ENCODE measurements at regions of chr4 and their contacts with region 1.

Region 1: GRCh38 chr4:100517864-100518341 is at the start of gene EMCN:
- DNase-seq: peak in 1 of 2 donors; percentile 56
- ATAC-seq: peak; percentile 75 to 93 (median 91)
- H3K4me3 ChIP-seq: peak within 1 kb of the TSS; percentile 6 to 64 (median 48)
- H3K27ac ChIP-seq: peak within 1 kb of the TSS; percentile 18 to 86 (median 76)
- H3K4me1 ChIP-seq: peaks cover 0 to 17% (median 0%) of the 10 kb centered on the region in 9 donors
- H3K27me3 ChIP-seq: no peaks in the 10 kb centered on the region
- CTCF ChIP-seq: no peak
- total RNA-seq, gene EMCN: 20.4 to 49.0 (median 35.6) TPM

Region 2: GRCh38 chr4:100421361-100421978 is 96.4 kb before region 1 on chr4:
- intact Hi-C with region 1: loop called in 1 of 10 experiments (anchors 10 kb)
- DNase-seq: no peak
- ATAC-seq: peak in 6 of 8 donors; percentile 43 to 81 (median 58)
- H3K4me3 ChIP-seq: peak overlapping the region in 3 of 10 donors; percentile 9 to 21 (median 10)
- H3K27ac ChIP-seq: peak overlapping the region in 5 of 10 donors; percentile 6 to 56 (median 37)
- H3K4me1 ChIP-seq: peaks cover 0 to 37% (median 8%) of the 10 kb centered on the region in 9 donors
- H3K27me3 ChIP-seq: no peaks in the 10 kb centered on the region
- CTCF ChIP-seq: peak; percentile 18 to 77 (median 57)

Region 3: DNA sequence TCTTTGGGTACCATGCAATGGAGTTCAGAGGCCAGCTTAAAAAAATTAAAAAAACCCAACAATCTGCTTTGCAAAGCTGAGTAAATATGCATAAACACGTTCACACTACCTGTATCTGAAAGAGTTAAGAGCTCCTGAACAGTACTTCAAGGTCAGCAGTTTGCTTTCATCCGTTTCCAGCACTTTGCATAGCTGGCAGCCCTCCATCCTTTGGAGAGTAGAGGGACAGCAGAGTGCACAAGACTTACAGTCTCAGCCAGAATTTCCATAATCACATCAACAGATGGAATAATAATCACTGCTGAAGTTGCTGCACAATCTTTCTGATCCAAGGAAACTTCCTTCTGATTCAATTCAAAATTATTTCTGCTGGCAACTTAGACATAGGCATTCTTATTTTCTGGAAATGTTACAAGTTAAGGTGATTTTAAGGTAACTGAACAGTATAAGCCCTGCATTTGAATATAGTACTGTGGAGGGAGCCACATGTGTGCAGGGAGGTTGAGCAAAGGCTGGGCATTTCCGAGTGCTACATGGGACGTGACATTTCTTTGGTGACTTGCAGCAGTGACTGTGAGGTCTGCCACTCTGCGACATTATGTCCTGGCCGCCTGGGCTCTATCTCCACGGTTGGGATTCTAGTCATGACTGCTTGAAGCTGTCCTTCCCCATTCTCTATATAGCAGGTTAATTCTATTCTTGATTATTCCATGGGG is 73.4 kb after region 1 on chr4:
- intact Hi-C with region 1: loop called in 1 of 10 experiments (anchors 5 kb)
- DNase-seq: peak; percentile 32 to 82
- ATAC-seq: peak; percentile 70 to 97 (median 93)
- H3K4me3 ChIP-seq: peak overlapping the region in 1 of 10 donors; percentile 5
- H3K27ac ChIP-seq: peak overlapping the region in 2 of 10 donors; percentile 41 to 50
- H3K4me1 ChIP-seq: peaks cover 0 to 29% (median 11%) of the 10 kb centered on the region in 9 donors
- H3K27me3 ChIP-seq: no peaks in the 10 kb centered on the region
- CTCF ChIP-seq: no peak

Region 4: DNA sequence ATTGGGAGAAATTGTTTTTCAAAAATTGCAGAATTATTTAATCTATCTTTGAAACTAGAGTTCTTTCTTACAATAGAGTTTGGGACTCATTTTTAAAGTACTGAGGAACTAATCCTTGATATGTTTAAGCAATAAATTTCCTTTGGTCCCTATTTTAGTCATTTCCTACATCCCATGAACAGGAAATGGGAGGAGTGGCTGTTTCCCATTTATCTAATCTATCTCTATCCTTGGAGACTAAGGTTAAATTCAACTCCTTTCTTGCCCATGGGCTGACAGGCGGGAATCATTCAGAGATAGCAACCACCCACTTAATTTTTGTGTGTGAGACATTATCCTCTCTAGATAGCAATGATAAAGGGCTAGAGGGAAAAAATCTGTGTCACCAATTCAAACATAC is 131.5 kb after region 1 on chr4:
- intact Hi-C with region 1: loop called in 4 of 10 experiments (anchors 2 to 10 kb)
- DNase-seq: no peak
- ATAC-seq: peak in 5 of 8 donors; percentile 44 to 83 (median 79)
- H3K4me3 ChIP-seq: no peak overlapping the region
- H3K27ac ChIP-seq: peak overlapping the region in 5 of 10 donors; percentile 5 to 51 (median 41)
- H3K4me1 ChIP-seq: peaks cover 0 to 26% (median 18%) of the 10 kb centered on the region in 9 donors
- H3K27me3 ChIP-seq: no peaks in the 10 kb centered on the region
- CTCF ChIP-seq: no peak

Region 5: GRCh38 chr4:100657187-100657586 is 139.3 kb after region 1 on chr4:
- intact Hi-C with region 1: loop called in 2 of 10 experiments (anchors 10 kb)
- DNase-seq: peak in 1 of 2 donors; percentile 3
- ATAC-seq: peak in 7 of 8 donors; percentile 29 to 83 (median 75)
- H3K4me3 ChIP-seq: no peak overlapping the region
- H3K27ac ChIP-seq: peak overlapping the region in 2 of 10 donors; percentile 10 to 16
- H3K4me1 ChIP-seq: peaks cover 0 to 27% (median 0%) of the 10 kb centered on the region in 9 donors
- H3K27me3 ChIP-seq: no peaks in the 10 kb centered on the region
- CTCF ChIP-seq: no peak

Region 6: GRCh38 chr4:100736641-100737451 is 218.9 kb after region 1 on chr4:
- intact Hi-C with region 1: loop called in 4 of 10 experiments (anchors 2 to 5 kb)
- DNase-seq: peak in 1 of 2 donors; percentile 34
- ATAC-seq: peak; percentile 53 to 92 (median 76)
- H3K4me3 ChIP-seq: no peak overlapping the region
- H3K27ac ChIP-seq: peak overlapping the region in 9 of 10 donors; percentile 20 to 63 (median 52)
- H3K4me1 ChIP-seq: peaks cover 0 to 34% (median 11%) of the 10 kb centered on the region in 9 donors
- H3K27me3 ChIP-seq: no peaks in the 10 kb centered on the region
- CTCF ChIP-seq: no peak

Region 7: DNA sequence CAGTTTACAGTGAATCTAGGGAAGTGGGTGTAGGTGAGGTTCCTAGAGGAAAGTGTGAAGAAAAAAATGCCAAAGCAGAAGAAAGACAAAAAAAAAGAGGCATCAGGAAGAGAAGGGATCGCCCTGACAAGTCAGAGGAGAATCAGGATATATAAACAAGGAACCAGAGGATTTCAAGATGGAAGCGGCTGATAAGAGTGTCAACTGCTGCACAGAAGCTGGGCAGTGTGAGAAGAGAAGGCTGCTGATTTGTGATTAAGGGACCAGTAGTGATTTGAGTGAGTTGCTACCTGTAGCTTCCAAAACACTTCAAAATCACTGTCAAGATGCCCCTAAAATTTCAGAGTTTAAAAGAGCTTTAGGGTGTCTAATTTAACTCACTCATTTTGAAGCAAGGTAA is 571.3 kb after region 1 on chr4:
- intact Hi-C with region 1: no loop called
- DNase-seq: no peak
- ATAC-seq: no peak
- H3K4me3 ChIP-seq: no peak overlapping the region
- H3K27ac ChIP-seq: no peak overlapping the region
- H3K4me1 ChIP-seq: no peaks in the 10 kb centered on the region
- H3K27me3 ChIP-seq: no peaks in the 10 kb centered on the region
- CTCF ChIP-seq: no peak

Region 8: DNA sequence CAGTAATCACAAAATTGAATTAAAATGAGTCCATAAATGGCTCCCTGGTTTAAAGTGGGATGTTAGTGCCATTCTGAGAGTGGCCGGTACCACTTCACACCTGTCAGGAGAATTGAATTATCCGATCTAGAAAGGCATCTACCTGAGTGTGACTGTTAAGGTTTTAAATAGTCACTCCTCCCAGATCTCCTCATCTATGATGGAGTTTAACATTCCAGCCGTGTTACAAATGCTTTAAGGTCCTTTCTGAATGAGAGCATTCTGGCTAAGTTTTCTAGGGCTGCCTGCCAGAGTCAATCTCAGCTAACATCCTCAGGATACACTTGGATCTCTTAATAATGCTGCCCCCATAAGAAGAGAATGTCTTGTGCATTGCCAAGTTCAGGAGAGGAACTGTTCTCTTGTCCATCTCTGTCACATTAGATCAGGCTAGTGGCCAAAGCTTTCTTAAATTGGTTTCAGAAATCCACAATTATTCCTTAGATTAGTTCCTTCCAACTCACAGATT is 1596.3 kb after region 1 on chr4:
- intact Hi-C with region 1: no loop called
- DNase-seq: no peak
- ATAC-seq: no peak
- H3K4me3 ChIP-seq: no peak overlapping the region
- H3K27ac ChIP-seq: no peak overlapping the region
- H3K4me1 ChIP-seq: no peaks in the 10 kb centered on the region
- H3K27me3 ChIP-seq: no peaks in the 10 kb centered on the region
- CTCF ChIP-seq: no peak